Posterior cingulate gyrus (tissue), 11 donors: ENCODE measurements at regions of chr6 and their contacts with region 1.

Region 1: GRCh38 chr6:39724787-39725631 is at the start of gene KIF6:
- DNase-seq: peak; percentile 90 to 99 (median 94)

Region 2: GRCh38 chr6:39772559-39773273 is 47.7 kb after region 1 on chr6:
- intact Hi-C with region 1: loop called (anchors 10 kb)
- DNase-seq: no peak